Dendritic cell treated with granulocyte-macrophage colony-stimulating factor and Interleukin-4, amounts not matched to agents 40 ng/mL and 50 ng/mL, for 4 days (primary cell): ENCODE measurements at regions of chr5 and their contacts with region 1.

Region 1: GRCh38 chr5:102583276-102584124 is 84.7 kb upstream of the SLCO6A1 start:
- H3K4me3 Mint-ChIP-seq: no peak overlapping the region
- H3K27ac Mint-ChIP-seq: no peak overlapping the region
- H3K4me1 Mint-ChIP-seq: no peaks in the 10 kb centered on the region
- H3K27me3 Mint-ChIP-seq: no peaks in the 10 kb centered on the region

Region 2: GRCh38 chr5:102670224-102670836 is 86.8 kb after region 1 on chr5:
- intact Hi-C with region 1: loop called (anchors 10 kb)
- H3K4me3 Mint-ChIP-seq: no peak overlapping the region
- H3K27ac Mint-ChIP-seq: no peak overlapping the region
- H3K4me1 Mint-ChIP-seq: no peaks in the 10 kb centered on the region
- H3K27me3 Mint-ChIP-seq: no peaks in the 10 kb centered on the region

Region 3: GRCh38 chr5:102754767-102755431 is 171.4 kb after region 1 on chr5 and contains the start of gene PAM:
- intact Hi-C with region 1: no loop called
- H3K4me3 Mint-ChIP-seq: peak within 1 kb of the TSS; percentile 96
- H3K27ac Mint-ChIP-seq: peak within 1 kb of the TSS; percentile 79
- H3K4me1 Mint-ChIP-seq: peaks cover 25% of the 10 kb centered on the region
- H3K27me3 Mint-ChIP-seq: peaks cover 29% of the 10 kb centered on the region

Region 4: DNA sequence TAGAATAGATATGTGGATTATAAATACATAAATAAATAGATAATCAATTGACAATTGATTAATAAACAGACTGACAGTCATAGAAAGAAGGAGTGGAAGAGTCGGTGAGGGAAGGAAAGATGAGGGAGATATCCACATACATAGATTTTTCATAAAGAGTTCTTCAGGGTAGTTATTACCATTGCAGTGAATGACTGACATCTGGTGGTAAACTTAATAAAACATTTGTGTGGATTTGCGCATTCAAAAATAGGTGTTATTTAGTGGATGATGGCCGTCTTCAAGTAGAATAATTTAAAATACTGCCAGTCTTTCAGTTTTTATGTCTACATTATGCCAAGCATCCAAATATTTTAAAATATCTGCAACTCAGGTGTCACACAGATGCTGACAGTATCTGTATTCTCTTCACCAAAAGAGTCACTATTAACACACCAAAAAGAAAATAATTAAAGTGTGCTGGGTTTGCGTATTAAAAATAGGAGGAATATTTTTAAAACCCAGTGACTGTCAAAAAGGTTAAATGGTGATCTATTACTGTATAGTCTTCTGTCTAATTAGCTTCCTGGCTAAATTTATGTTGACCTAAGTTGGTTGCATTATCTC is 457.7 kb after region 1 on chr5:
- intact Hi-C with region 1: loop called (anchors 2 kb)
- H3K4me3 Mint-ChIP-seq: no peak overlapping the region
- H3K27ac Mint-ChIP-seq: no peak overlapping the region
- H3K4me1 Mint-ChIP-seq: no peaks in the 10 kb centered on the region
- H3K27me3 Mint-ChIP-seq: no peaks in the 10 kb centered on the region

Region 5: GRCh38 chr5:103139264-103139865 is 555.9 kb after region 1 on chr5:
- intact Hi-C with region 1: loop called (anchors 5 kb)
- H3K4me3 Mint-ChIP-seq: no peak overlapping the region
- H3K27ac Mint-ChIP-seq: no peak overlapping the region
- H3K4me1 Mint-ChIP-seq: peaks cover 3% of the 10 kb centered on the region
- H3K27me3 Mint-ChIP-seq: no peaks in the 10 kb centered on the region

Region 6: GRCh38 chr5:103224118-103224893 is 640.8 kb after region 1 on chr5:
- intact Hi-C with region 1: loop called (anchors 2 kb)
- H3K4me3 Mint-ChIP-seq: peak overlapping the region; percentile 53
- H3K27ac Mint-ChIP-seq: no peak overlapping the region
- H3K4me1 Mint-ChIP-seq: peaks cover 14% of the 10 kb centered on the region
- H3K27me3 Mint-ChIP-seq: no peaks in the 10 kb centered on the region